B cell (primary cell): ENCODE measurements at regions of chr19 and their contacts with region 1.

Region 1: GRCh38 chr19:2702162-2703076 is at the start of gene GNG7:
- DNase-seq: peak; percentile 94
- ATAC-seq: peak; percentile 98
- H3K4me3 ChIP-seq: peak within 1 kb of the TSS; percentile 58 to 96 (median 77)
- H3K4me3 Mint-ChIP-seq: peak within 1 kb of the TSS; percentile 89
- H3K27ac ChIP-seq: peak within 1 kb of the TSS; percentile 81 to 89
- H3K27ac Mint-ChIP-seq: peak within 1 kb of the TSS; percentile 94
- H3K4me1 ChIP-seq: peaks cover 46 to 50% of the 10 kb centered on the region in 2 donors
- H3K4me1 Mint-ChIP-seq: peaks cover 37% of the 10 kb centered on the region
- H3K27me3 ChIP-seq: no peaks in the 10 kb centered on the region
- H3K27me3 Mint-ChIP-seq: no peaks in the 10 kb centered on the region
- CTCF ChIP-seq: no peak
- total RNA-seq, gene GNG7: 153 and 160 TPM in 2 replicates

Region 2: GRCh38 chr19:2119921-2120785 is 582.3 kb before region 1 on chr19:
- CTCF ChIA-PET with region 1: no interaction called
- POLR2A ChIA-PET with region 1: interaction called, 11 read pairs
- intact Hi-C with region 1: no loop called
- DNase-seq: no peak
- ATAC-seq: peak; percentile 5
- H3K4me3 ChIP-seq: no peak overlapping the region
- H3K4me3 Mint-ChIP-seq: no peak overlapping the region
- H3K27ac ChIP-seq: no peak overlapping the region
- H3K27ac Mint-ChIP-seq: no peak overlapping the region
- H3K4me1 ChIP-seq: no peaks in the 10 kb centered on the region
- H3K4me1 Mint-ChIP-seq: no peaks in the 10 kb centered on the region
- H3K27me3 ChIP-seq: no peaks in the 10 kb centered on the region
- H3K27me3 Mint-ChIP-seq: no peaks in the 10 kb centered on the region
- CTCF ChIP-seq: no peak

Region 3: GRCh38 chr19:2663920-2664571 is 38.4 kb before region 1 on chr19:
- CTCF ChIA-PET with region 1: interaction called, 6 read pairs
- POLR2A ChIA-PET with region 1: interaction called, 12 read pairs
- intact Hi-C with region 1: loop called (anchors 1 kb)
- DNase-seq: peak; percentile 95
- ATAC-seq: peak; percentile 86
- H3K4me3 ChIP-seq: no peak overlapping the region
- H3K4me3 Mint-ChIP-seq: peak overlapping the region; percentile 78
- H3K27ac ChIP-seq: peak overlapping the region; percentile 92
- H3K27ac Mint-ChIP-seq: peak overlapping the region; percentile 98
- H3K4me1 ChIP-seq: peaks cover 35 to 43% of the 10 kb centered on the region in 2 donors
- H3K4me1 Mint-ChIP-seq: peaks cover 59% of the 10 kb centered on the region
- H3K27me3 ChIP-seq: no peaks in the 10 kb centered on the region
- H3K27me3 Mint-ChIP-seq: no peaks in the 10 kb centered on the region
- CTCF ChIP-seq: peak; percentile 75

Region 4: DNA sequence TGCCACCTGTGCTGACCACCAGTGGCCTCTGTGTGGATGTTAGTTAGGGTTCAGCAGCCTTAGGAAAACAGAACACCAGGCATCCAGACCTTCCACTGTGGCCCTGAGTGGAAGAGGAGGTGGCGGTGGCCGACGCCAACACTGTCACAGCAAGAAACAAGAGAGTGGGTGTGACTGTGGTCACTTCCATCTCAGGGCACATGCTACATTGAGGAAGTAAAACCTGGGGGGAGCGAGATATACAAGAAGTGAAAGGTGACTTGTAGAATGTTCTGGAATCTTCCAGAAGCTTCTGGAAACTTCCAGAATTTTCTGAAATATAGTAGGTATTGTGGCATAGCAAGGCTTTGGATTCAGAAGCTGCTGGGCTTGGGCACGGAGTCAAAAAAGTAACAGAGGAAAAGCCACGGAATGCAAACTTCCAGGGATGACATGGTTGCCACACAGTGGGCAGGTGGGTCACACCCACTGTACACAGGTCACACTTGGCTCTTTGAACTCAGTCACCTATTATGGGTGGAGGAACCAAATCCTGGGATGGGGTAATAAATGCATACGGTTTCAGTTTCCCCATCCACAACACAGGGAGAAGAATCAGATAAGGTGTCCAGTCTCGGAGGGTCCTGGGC is 24.3 kb before region 1 on chr19:
- CTCF ChIA-PET with region 1: interaction called, 19 read pairs
- POLR2A ChIA-PET with region 1: interaction called, 86 read pairs
- intact Hi-C with region 1: loop called (anchors 1 kb)
- DNase-seq: peak; percentile 91
- ATAC-seq: peak; percentile 59
- H3K4me3 ChIP-seq: no peak overlapping the region
- H3K4me3 Mint-ChIP-seq: peak overlapping the region; percentile 49
- H3K27ac ChIP-seq: peak overlapping the region; percentile 99 to 100
- H3K27ac Mint-ChIP-seq: peak overlapping the region; percentile 88
- H3K4me1 ChIP-seq: peaks cover 56 to 66% of the 10 kb centered on the region in 2 donors
- H3K4me1 Mint-ChIP-seq: peaks cover 70% of the 10 kb centered on the region
- H3K27me3 ChIP-seq: no peaks in the 10 kb centered on the region
- H3K27me3 Mint-ChIP-seq: no peaks in the 10 kb centered on the region
- CTCF ChIP-seq: no peak

Region 5: GRCh38 chr19:2733930-2734588 is 31.6 kb after region 1 on chr19:
- CTCF ChIA-PET with region 1: interaction called, 5 read pairs
- POLR2A ChIA-PET with region 1: interaction called, 13 read pairs
- intact Hi-C with region 1: no loop called
- DNase-seq: no peak
- ATAC-seq: no peak
- H3K4me3 ChIP-seq: no peak overlapping the region
- H3K4me3 Mint-ChIP-seq: no peak overlapping the region
- H3K27ac ChIP-seq: no peak overlapping the region
- H3K27ac Mint-ChIP-seq: peak overlapping the region; percentile 20
- H3K4me1 ChIP-seq: peaks cover 4 to 12% of the 10 kb centered on the region in 2 donors
- H3K4me1 Mint-ChIP-seq: peaks cover 24% of the 10 kb centered on the region
- H3K27me3 ChIP-seq: no peaks in the 10 kb centered on the region
- H3K27me3 Mint-ChIP-seq: no peaks in the 10 kb centered on the region
- CTCF ChIP-seq: no peak

Region 6: GRCh38 chr19:2739602-2740313 is 37.3 kb after region 1 on chr19 and contains the start of gene SLC39A3:
- CTCF ChIA-PET with region 1: interaction called, 5 read pairs
- POLR2A ChIA-PET with region 1: interaction called, 13 read pairs
- intact Hi-C with region 1: loop called (anchors 1 kb)
- DNase-seq: peak; percentile 98
- ATAC-seq: peak; percentile 100
- H3K4me3 ChIP-seq: peak within 1 kb of the TSS; percentile 50 to 93 (median 87)
- H3K4me3 Mint-ChIP-seq: peak within 1 kb of the TSS; percentile 92
- H3K27ac ChIP-seq: peak within 1 kb of the TSS; percentile 26 to 77
- H3K27ac Mint-ChIP-seq: peak within 1 kb of the TSS; percentile 81
- H3K4me1 ChIP-seq: peaks cover 10 to 20% of the 10 kb centered on the region in 2 donors
- H3K4me1 Mint-ChIP-seq: peaks cover 25% of the 10 kb centered on the region
- H3K27me3 ChIP-seq: no peaks in the 10 kb centered on the region
- H3K27me3 Mint-ChIP-seq: peaks cover 10% of the 10 kb centered on the region
- CTCF ChIP-seq: no peak
- total RNA-seq, gene SLC39A3: 32.8 and 36.4 TPM in 2 replicates

Region 7: DNA sequence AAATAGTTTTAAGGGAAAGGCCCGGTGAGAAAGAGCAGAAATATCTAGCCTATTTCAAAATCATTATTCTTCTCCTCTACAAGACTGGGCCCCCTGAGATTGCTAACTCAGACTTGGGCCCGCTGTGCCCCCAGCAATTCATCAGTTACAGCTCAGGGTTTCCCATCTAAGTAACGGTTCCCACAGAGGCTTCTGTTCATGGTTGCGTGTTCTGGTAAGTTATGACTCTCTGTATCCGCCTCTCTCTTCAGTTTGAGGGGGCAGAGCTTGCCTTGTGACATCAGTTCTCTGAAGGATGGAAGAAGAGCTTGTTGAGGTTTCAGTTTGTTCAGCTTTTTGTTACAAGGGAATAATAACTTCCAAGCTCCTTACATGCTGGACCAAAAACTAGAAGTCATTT is 209.9 kb after region 1 on chr19:
- CTCF ChIA-PET with region 1: no interaction called
- POLR2A ChIA-PET with region 1: no interaction called
- intact Hi-C with region 1: no loop called
- DNase-seq: no peak
- ATAC-seq: no peak
- H3K4me3 ChIP-seq: no peak overlapping the region
- H3K4me3 Mint-ChIP-seq: no peak overlapping the region
- H3K27ac ChIP-seq: no peak overlapping the region
- H3K27ac Mint-ChIP-seq: no peak overlapping the region
- H3K4me1 ChIP-seq: no peaks in the 10 kb centered on the region
- H3K4me1 Mint-ChIP-seq: peaks cover 5% of the 10 kb centered on the region
- H3K27me3 ChIP-seq: no peaks in the 10 kb centered on the region
- H3K27me3 Mint-ChIP-seq: no peaks in the 10 kb centered on the region
- CTCF ChIP-seq: no peak